BJ (cell line): ENCODE measurements at regions of chr1 and their contacts with region 1.

Region 1: GRCh38 chr1:44730741-44731512 is at the start of gene RNU5D-1:
- DNase-seq: peak; percentile 84
- H3K4me3 ChIP-seq: peak within 1 kb of the TSS; percentile 29; the same call in 1 of the 2 replicates
- H3K27me3 ChIP-seq: no peaks in the 10 kb centered on the region
- CTCF ChIP-seq: peak; percentile 87
- polyA plus RNA-seq, gene RNU5D-1: not detected in 2 replicates

Region 2: DNA sequence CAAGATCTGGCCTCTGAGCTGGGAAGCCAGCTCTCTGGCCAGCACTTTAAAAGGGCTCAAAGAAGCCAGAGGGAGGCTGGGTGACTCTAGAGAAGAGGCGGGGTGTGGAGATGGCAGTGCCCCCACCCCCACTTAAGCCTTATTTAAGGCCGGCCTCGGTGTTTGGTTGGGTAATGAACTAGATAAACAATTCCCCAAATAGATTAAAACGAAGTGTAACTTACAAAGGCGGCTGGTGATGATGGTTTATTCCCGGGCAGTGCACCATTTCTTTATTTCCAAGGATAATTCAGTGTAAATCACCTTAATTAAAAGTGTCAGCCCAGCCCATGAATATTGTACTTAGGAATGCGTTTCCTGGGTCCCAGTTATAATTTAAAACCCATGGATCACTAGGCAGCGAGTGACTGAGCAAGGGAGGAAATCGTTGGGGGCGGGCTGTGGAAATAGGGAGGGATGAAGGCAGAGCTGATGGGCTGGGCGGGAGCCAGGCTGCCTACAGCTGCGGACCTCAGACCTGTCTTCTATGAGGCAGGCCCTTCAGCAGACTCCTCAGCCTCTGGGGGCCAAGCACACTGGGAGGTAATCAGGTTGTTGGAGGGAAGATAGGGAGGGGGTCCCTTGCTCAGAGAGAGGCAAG is 111.5 kb before region 1 on chr1:
- CTCF ChIA-PET with region 1: no interaction called
- POLR2A ChIA-PET with region 1: no interaction called
- DNase-seq: peak; percentile 85
- H3K4me3 ChIP-seq: no peak overlapping the region
- H3K27me3 ChIP-seq: no peaks in the 10 kb centered on the region
- CTCF ChIP-seq: no peak

Region 3: DNA sequence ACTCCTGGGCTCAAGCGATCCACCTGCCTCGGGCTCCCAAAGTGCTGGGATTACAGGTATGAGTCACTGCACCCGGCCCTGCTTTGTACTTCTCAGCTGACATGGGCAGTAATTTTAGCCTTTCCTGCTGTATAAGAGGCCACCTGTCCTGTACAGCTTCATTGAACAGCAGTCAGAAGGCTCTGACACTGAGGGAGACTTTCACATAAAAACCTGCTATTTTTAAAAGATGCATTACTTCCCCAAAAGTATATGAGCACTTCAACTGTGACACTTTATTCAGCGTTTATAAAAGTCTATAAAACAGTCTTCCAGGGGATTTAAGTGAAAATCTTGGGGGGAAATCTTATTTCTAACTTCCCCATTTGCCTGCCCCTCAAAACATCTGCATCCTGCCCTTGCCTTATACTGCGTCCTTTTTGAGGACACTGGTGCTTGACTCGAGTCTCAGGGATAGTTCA is 17.6 kb before region 1 on chr1:
- CTCF ChIA-PET with region 1: interaction called, 43 read pairs
- POLR2A ChIA-PET with region 1: no interaction called
- DNase-seq: no peak
- H3K4me3 ChIP-seq: no peak overlapping the region
- H3K27me3 ChIP-seq: peaks cover 5% of the 10 kb centered on the region; the same call in 1 of the 2 replicates
- CTCF ChIP-seq: no peak

Region 4: DNA sequence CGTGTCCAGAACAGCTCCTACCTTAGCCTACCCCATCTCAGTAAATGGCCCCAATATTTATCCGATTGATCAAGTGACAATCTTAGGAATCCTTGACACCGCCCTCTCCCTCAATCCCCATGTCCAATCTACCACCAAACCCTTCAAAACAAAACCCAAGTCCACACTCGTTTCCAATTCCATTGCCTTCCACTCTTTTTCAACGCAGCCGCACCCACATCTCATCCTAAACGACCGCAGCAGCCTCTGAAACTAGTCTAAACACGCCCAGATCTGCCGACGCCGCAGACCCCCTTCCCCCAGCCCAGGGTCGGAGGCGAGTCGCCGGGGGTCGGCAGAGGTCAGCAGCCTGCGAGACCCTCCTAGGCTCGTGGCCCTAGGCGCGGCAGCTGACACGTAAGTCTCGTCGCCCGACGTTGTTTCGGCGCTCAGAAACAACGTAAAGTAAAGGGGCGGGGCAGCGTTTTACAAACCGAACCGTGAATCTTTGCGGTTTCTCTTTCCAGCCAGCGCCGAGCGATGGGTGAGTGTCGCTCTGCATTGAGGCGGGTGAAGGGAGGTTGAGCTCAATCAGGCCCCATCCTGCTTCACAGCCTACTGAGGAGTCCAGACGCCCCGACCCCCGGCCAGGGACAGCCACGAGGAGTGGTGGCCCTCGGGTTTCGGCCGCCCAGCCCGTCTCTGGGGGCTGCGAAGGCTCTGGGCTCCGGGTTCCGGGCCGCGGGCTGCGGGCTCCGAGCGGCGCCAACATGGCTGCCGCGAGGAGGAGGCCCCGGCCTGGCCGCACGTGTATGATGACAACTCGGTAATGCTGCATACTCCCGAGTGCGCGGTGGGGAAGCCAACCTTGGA is 44.4 kb after region 1 on chr1 and contains the start of gene RPS8:
- CTCF ChIA-PET with region 1: interaction called, 15 read pairs
- POLR2A ChIA-PET with region 1: interaction called, 3 read pairs
- DNase-seq: peak; percentile 65
- H3K4me3 ChIP-seq: peak within 1 kb of the TSS; percentile 86
- H3K27me3 ChIP-seq: no peaks in the 10 kb centered on the region
- CTCF ChIP-seq: no peak
- polyA plus RNA-seq, gene RPS8: 3,104 and 3,306 TPM in 2 replicates